ENCODE measurements at regions of chr9 and their contacts with region 1.

Region 1: GRCh38 chr9:72038890-72039410 is 21.5 kb downstream of the C9orf57 start:
- DNase-seq: peak in 2 of 3 donors; percentile 84 to 86
- ATAC-seq: peak; percentile 96
- H3K4me3 ChIP-seq: no peak overlapping the region
- H3K4me1 ChIP-seq: no peaks in the 10 kb centered on the region
- CTCF ChIP-seq: peak; percentile 89

Region 2: DNA sequence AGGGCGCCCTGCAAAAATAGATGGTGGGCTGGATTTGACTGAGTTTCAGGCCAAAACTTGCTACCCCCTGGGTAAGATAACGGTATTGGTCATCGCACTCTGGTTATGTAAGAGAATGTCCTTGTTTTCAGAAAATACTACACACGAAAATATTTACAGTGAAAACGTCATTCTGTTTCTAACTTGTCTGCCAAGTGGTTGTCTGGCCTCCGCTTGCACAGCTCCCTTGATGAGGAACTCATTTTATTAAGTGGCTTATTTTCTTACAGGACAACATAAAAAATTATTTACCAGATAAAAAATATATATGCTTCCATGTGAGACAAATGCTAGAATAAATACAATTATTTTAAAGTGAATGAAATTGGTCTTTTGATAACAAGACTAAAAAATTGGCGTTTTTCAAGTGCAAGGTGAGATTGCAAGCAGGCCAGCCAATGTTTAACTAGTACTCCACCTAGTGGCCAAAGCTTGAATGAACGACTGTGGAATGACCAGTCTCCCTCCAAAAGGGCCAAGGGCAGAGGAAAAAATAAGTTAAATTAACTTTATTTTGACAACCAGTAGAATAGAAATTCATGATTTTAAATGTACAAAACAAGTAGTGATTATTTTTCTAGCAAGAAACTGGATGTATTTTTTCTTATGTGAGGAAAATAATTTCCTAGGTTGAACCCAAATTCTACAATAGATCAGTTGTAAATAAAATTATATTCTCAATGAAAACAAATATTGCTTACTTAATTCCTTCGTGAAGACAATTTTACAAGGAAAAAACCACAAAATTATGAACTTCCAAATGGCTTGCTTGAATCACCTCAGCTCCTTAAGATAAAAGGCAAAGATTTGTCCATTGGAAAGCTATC is 232.9 kb after region 1 on chr9:
- intact Hi-C with region 1: loop called (anchors 2 to 5 kb)
- DNase-seq: peak in 1 of 3 donors; percentile 88
- ATAC-seq: peak; percentile 72
- H3K4me3 ChIP-seq: no peak overlapping the region
- H3K4me1 ChIP-seq: no peaks in the 10 kb centered on the region
- CTCF ChIP-seq: peak; percentile 48

Measured in mucosa of descending colon (tissue), 3 donors.